ENCODE measurements at regions of chr12 and their contacts with region 1.

Region 1: DNA sequence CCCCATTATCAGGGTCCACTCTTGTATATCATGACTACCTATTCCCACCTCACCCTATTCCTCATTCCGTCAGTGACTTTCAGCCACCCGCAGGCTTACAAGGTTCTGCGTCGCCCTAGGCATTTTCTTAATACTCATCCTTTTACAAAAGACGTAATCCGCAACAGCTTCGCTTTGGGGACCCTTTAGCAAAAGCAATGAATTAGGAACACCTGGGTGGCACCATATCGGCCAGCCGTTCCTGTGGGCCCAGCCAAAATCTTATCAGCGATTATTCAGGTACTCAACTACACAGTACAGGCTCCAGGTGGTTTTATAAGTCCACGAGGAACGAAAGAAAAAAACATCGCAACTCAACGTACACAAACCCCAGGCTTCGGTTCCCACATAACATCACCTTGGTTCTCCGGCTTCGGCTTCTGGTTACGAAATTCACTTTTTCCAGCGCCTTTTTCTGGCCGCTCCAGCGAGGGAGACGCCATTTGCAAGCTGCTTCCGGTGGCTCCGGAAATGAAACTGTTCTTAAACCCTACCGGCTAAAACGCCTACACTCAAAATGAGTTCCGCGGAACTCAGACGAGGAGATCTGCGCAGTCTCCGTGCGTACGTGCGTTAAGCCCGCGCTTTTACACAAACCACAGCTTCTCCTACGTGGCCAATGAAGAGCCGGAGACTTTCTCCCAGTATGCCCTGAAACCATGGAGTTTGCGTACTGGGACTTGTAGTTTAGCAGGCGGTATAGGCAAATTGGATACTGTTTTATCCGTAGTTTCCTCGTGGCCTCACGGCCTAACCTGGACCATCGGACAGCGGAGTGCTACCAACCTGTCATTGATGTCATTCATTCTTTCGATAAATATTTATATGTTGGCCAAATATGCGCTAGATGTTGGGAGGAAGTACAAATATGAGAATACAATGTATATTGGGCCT is at the start of gene KRR1:
- DNase-seq: peak; percentile 87 to 93
- ATAC-seq: peak; percentile 100
- H3K4me3 ChIP-seq: peak within 1 kb of the TSS; percentile 57 to 99 (median 82)
- H3K27ac ChIP-seq: peak within 1 kb of the TSS; percentile 69 to 83 (median 77)
- H3K4me1 ChIP-seq: peaks cover 26 to 35% of the 10 kb centered on the region in 2 donors
- H3K27me3 ChIP-seq: no peaks in the 10 kb centered on the region
- CTCF ChIP-seq: peak in 2 of 5 experiments; percentile 4 to 36
- POLR2A ChIP-seq: peak; percentile 34 to 52
- total RNA-seq, gene KRR1: 26.8 to 43.1 (median 34.8) TPM

Region 2: DNA sequence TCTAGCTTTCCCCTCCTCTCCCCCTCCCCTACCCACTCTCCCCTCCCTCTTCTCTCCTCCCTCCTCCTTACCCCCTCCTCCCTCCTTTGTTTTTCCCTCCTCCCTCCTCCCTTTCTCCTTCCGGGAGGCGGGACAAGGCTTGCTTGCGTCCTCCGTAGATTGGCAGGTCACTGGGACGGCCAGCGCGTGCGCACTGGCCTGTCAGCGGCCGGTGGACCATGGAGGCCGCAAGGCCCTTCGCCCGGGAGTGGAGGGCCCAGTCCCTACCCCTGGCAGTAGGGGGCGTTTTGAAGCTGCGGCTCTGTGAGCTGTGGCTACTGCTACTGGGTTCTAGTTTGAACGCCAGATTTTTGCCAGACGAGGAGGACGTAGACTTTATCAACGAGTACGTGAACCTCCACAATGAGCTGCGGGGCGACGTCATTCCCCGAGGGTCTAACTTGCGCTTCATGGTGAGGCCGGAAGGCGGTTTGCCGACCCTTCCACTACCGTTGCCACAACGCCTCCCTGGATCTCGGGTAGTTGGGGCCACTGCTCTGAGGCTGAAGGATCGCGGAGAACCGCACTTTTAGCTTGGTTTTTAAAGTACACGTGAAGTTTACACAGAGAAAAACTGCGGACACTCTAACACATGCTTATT is 120.4 kb before region 1 on chr12 and contains the start of gene GLIPR1L2:
- in situ Hi-C with region 1: no loop called
- intact Hi-C with region 1: loop called (anchors 1 kb)
- DNase-seq: peak; percentile 90 to 95
- ATAC-seq: peak; percentile 96 to 98
- H3K4me3 ChIP-seq: peak within 1 kb of the TSS; percentile 65 to 84 (median 76)
- H3K27ac ChIP-seq: peak within 1 kb of the TSS; percentile 84 to 93 (median 90)
- H3K4me1 ChIP-seq: peaks cover 23 to 24% of the 10 kb centered on the region in 2 donors
- H3K27me3 ChIP-seq: no peaks in the 10 kb centered on the region
- CTCF ChIP-seq: peak; percentile 73 to 86 (median 79)
- POLR2A ChIP-seq: peak; percentile 68 to 77
- total RNA-seq, gene GLIPR1L2: 0.33 to 1.0 (median 0.49) TPM in 3 of 4 donors, not detected in the other

Region 3: DNA sequence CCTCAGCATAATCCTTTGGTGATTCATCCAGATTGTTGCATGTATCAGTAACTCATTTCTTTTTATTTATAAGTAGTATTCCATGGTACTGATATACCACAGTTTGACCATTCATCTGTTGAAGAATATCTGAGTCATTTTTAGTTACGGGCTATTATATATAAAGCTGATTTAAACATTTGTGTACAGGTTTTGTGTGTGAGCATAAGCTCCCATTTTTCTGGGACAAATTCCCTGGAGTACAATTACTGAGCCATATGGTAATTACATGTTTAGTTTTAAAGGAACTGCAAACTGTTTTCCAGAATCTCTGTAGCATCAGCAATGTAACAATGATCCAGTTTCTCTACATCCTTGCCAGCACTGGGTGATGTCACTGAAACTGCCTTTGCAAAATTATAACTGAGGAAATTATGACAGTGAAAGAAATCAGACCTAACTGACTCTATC is 236.2 kb after region 1 on chr12:
- in situ Hi-C with region 1: no loop called
- intact Hi-C with region 1: no loop called
- DNase-seq: no peak
- ATAC-seq: no peak
- H3K4me3 ChIP-seq: no peak overlapping the region
- H3K27ac ChIP-seq: no peak overlapping the region
- H3K4me1 ChIP-seq: no peaks in the 10 kb centered on the region
- H3K27me3 ChIP-seq: no peaks in the 10 kb centered on the region
- CTCF ChIP-seq: no peak
- POLR2A ChIP-seq: no peak

Region 4: DNA sequence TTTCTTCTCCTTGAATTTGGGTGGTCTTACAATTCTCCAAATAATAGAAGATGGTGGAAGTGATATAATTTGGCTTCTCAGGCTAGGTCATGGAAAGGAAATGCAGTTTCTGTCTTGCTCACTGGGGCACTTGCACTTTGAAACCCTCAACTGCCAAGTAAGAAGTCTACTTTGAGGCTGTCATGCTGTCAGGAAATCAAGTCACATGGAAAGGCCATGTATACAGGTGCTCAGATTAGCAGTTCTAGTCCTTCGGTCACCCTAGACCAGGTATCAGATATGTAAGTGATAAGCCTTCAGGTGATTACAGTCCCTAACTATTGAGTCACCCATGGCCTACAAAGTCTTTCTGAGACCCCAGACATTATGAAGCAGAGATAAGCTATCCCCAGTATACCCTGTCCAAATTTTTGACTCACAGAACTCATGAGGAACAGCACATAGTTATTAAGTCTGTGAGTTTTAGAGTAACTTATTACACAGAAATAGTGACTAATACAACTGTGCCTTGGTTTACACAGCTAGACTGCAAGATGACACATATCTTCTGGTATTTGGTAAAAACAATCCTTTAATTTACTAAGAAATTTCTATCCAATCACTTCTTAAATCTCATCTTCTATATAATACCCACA is 863.1 kb after region 1 on chr12:
- in situ Hi-C with region 1: loop called in 1 of 4 experiments (anchors 25 kb)
- intact Hi-C with region 1: no loop called
- DNase-seq: no peak
- ATAC-seq: no peak
- H3K4me3 ChIP-seq: no peak overlapping the region
- H3K27ac ChIP-seq: no peak overlapping the region
- H3K4me1 ChIP-seq: no peaks in the 10 kb centered on the region
- H3K27me3 ChIP-seq: no peaks in the 10 kb centered on the region
- CTCF ChIP-seq: no peak
- POLR2A ChIP-seq: no peak

Region 5: GRCh38 chr12:76763743-76764675 is 1252.6 kb after region 1 on chr12 and contains the start of gene ZDHHC17:
- in situ Hi-C with region 1: loop called in 1 of 4 experiments (anchors 25 kb)
- intact Hi-C with region 1: no loop called
- DNase-seq: peak; percentile 80 to 92
- ATAC-seq: peak; percentile 85 to 87
- H3K4me3 ChIP-seq: peak within 1 kb of the TSS; percentile 75 to 99 (median 86)
- H3K27ac ChIP-seq: peak within 1 kb of the TSS; percentile 92 to 100 (median 98)
- H3K4me1 ChIP-seq: peaks cover 26 to 41% of the 10 kb centered on the region in 2 donors
- H3K27me3 ChIP-seq: no peaks in the 10 kb centered on the region
- CTCF ChIP-seq: peak in 1 of 5 experiments; percentile 14
- POLR2A ChIP-seq: peak; percentile 70 to 79
- total RNA-seq, gene ZDHHC17: 15.5 to 35.6 (median 19.3) TPM

Measured in gastrocnemius medialis (tissue), 4 donors.